Activated CD8-positive, alpha-beta T cell treated with anti-CD3 and anti-CD28 coated beads, Interleukin-2, amount 10 ng/mL, durations not matched to agents 7 days and 5 days (primary cell): ENCODE measurements at regions of chr10 and their contacts with region 1.

Region 1: GRCh38 chr10:73743905-73744663 is at the start of gene SEC24C:
- DNase-seq: peak; percentile 97
- ATAC-seq: peak; percentile 95
- H3K4me3 Mint-ChIP-seq: peak within 1 kb of the TSS; percentile 99
- H3K27ac Mint-ChIP-seq: peak within 1 kb of the TSS; percentile 100
- H3K4me1 Mint-ChIP-seq: peaks cover 30% of the 10 kb centered on the region
- H3K27me3 Mint-ChIP-seq: no peaks in the 10 kb centered on the region
- total RNA-seq, gene SEC24C: 88.9 to 94.6 TPM

Region 2: GRCh38 chr10:73730153-73730906 is 13.8 kb before region 1 on chr10:
- CTCF ChIA-PET with region 1: interaction called, 13 read pairs
- POLR2A ChIA-PET with region 1: interaction called, 27 read pairs
- DNase-seq: peak; percentile 94
- ATAC-seq: peak; percentile 93
- H3K4me3 Mint-ChIP-seq: peak overlapping the region; percentile 92
- H3K27ac Mint-ChIP-seq: peak overlapping the region; percentile 97
- H3K4me1 Mint-ChIP-seq: peaks cover 16% of the 10 kb centered on the region
- H3K27me3 Mint-ChIP-seq: no peaks in the 10 kb centered on the region

Region 3: GRCh38 chr10:73759512-73760115 is 15.5 kb after region 1 on chr10:
- CTCF ChIA-PET with region 1: interaction called, 6 read pairs
- POLR2A ChIA-PET with region 1: interaction called, 23 read pairs
- DNase-seq: peak; percentile 68
- ATAC-seq: peak; percentile 87
- H3K4me3 Mint-ChIP-seq: peak overlapping the region; percentile 35
- H3K27ac Mint-ChIP-seq: peak overlapping the region; percentile 91
- H3K4me1 Mint-ChIP-seq: peaks cover 46% of the 10 kb centered on the region
- H3K27me3 Mint-ChIP-seq: no peaks in the 10 kb centered on the region

Region 4: DNA sequence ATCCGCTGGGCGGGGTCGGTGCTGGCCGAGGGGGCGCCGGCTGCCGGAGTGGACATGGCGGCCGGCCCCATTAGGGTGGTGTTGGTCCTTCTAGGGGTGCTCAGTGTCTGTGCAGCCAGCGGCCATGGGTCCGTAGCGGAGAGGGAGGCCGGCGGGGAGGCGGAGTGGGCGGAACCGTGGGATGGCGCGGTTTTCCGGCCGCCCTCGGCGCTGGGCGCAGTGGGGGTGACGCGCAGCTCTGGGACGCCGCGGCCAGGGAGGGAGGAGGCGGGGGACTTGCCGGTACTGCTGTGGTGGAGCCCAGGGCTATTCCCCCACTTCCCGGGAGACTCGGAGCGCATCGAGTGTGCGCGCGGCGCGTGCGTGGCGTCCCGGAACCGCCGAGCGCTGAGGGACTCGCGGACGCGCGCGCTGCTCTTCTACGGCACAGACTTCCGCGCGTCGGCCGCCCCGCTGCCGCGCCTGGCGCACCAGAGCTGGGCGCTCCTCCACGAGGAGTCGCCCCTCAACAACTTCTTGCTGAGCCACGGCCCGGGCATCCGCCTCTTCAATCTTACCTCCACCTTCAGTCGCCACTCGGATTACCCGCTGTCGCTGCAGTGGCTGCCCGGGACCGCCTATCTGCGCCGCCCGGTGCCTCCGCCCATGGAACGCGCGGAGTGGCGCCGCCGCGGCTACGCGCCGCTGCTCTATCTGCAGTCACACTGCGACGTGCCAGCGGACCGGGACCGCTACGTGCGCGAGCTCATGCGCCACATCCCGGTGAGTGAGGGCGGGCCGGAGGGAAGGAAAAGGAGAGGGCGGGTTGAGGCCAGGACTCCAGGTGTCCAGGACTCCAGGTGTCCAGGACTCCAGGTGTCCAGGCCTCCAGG is 28.4 kb after region 1 on chr10:
- CTCF ChIA-PET with region 1: interaction called, 4 read pairs
- POLR2A ChIA-PET with region 1: interaction called, 17 read pairs
- DNase-seq: peak; percentile 87
- ATAC-seq: peak; percentile 77
- H3K4me3 Mint-ChIP-seq: peak overlapping the region; percentile 94
- H3K27ac Mint-ChIP-seq: peak overlapping the region; percentile 95
- H3K4me1 Mint-ChIP-seq: peaks cover 64% of the 10 kb centered on the region
- H3K27me3 Mint-ChIP-seq: no peaks in the 10 kb centered on the region

Region 5: GRCh38 chr10:73785221-73785720 is 41.2 kb after region 1 on chr10 and contains the start of gene ZSWIM8:
- CTCF ChIA-PET with region 1: no interaction called
- POLR2A ChIA-PET with region 1: interaction called, 14 read pairs
- DNase-seq: peak; percentile 92
- ATAC-seq: peak; percentile 86
- H3K4me3 Mint-ChIP-seq: peak within 1 kb of the TSS; percentile 98
- H3K27ac Mint-ChIP-seq: peak within 1 kb of the TSS; percentile 99
- H3K4me1 Mint-ChIP-seq: peaks cover 50% of the 10 kb centered on the region
- H3K27me3 Mint-ChIP-seq: no peaks in the 10 kb centered on the region
- total RNA-seq, gene ZSWIM8: 58.3 to 69.3 TPM

Region 6: GRCh38 chr10:73857446-73857845 is 113.4 kb after region 1 on chr10:
- CTCF ChIA-PET with region 1: no interaction called
- POLR2A ChIA-PET with region 1: no interaction called
- DNase-seq: peak; percentile 53
- ATAC-seq: peak; percentile 56
- H3K4me3 Mint-ChIP-seq: peak overlapping the region; percentile 22
- H3K27ac Mint-ChIP-seq: peak overlapping the region; percentile 65
- H3K4me1 Mint-ChIP-seq: peaks cover 71% of the 10 kb centered on the region
- H3K27me3 Mint-ChIP-seq: no peaks in the 10 kb centered on the region